ENCODE measurements at regions of chr2 and their contacts with region 1.

Region 1: DNA sequence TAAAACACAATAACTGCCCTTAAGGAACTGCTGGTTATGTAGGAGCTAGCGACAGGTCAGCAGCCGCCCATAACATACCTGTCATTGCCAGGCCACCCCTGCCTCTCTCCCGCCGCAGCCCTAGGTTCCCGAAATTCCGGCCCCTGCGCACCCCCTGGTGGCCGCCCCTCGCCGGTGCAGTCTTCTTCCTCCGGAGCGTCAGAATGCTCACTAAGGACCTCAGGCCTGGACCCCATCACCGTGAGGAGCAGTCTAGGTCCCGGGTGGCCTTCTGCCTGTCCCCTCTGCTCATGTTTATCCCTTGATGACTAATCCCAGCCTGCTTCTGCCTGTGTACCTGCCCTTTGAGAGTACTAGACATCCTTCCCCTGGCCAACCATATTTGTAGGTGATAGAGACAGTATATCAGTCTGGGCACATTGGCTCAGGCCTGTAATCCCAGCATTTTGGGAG is 115.7 kb upstream of the SLC1A4 start:
- DNase-seq: peak in 1 of 2 donors; percentile 68
- ATAC-seq: peak; percentile 83 to 90
- H3K4me3 ChIP-seq: peak overlapping the region; percentile 14 to 50 (median 36)
- H3K27ac ChIP-seq: no peak overlapping the region
- H3K4me1 ChIP-seq: peaks cover 0 to 7% of the 10 kb centered on the region in 2 donors
- H3K27me3 ChIP-seq: no peaks in the 10 kb centered on the region
- CTCF ChIP-seq: peak; percentile 90 to 98 (median 92)
- POLR2A ChIP-seq: no peak

Region 2: GRCh38 chr2:64609227-64609941 is 264.1 kb before region 1 on chr2:
- in situ Hi-C with region 1: loop called in 1 of 4 experiments (anchors 25 kb)
- intact Hi-C with region 1: no loop called
- DNase-seq: peak in 1 of 2 donors; percentile 34
- ATAC-seq: peak; percentile 76 to 79
- H3K4me3 ChIP-seq: peak overlapping the region; percentile 59 to 85 (median 66)
- H3K27ac ChIP-seq: peak overlapping the region; percentile 65 to 83 (median 77)
- H3K4me1 ChIP-seq: peaks cover 8 to 11% of the 10 kb centered on the region in 2 donors
- H3K27me3 ChIP-seq: no peaks in the 10 kb centered on the region
- CTCF ChIP-seq: peak in 4 of 5 experiments; percentile 71 to 76 (median 74)
- POLR2A ChIP-seq: peak in 1 of 2 donors; percentile 24

Region 3: DNA sequence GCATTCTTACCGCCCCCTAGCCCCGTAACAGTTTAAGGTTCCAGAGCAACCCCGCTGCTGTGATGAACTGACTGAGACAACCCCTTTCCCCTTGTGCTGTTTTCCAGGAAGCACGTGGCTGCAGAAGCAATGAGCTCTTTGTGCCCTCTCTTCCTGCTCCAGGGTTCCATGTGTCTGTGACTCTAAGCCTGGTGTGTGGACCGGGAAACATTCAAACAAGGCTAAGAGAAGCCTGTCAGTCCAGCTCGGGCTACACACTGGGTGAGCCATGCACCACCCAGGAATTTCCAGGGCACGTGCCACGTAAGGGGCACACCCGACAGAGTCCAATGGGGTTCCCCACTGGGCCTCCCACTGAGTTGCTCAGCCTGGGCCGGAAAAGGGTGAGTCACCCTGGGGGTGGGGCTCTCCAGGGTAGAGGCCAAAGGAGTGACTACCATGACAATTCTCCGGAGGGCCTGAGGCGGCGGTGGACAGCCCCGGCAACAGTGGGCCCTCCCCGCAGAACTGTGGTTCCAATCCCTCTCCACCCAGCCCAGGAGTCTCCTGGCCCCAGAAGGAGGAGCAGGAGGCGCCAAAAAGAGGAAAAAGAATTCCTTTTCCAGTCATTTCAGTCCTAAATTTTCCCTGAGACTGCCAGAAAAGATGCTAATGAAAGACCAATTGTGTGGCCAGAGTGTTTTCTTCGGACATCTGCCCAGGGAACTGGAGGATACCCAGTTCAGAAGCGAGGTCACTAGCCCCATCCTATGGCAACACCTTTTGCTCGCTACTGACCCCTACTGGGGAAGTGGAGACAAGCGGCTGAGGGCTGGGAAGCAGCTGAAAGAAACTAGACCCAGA is 42.1 kb before region 1 on chr2:
- in situ Hi-C with region 1: no loop called
- intact Hi-C with region 1: no loop called
- DNase-seq: peak; percentile 40 to 80
- ATAC-seq: peak; percentile 81 to 89
- H3K4me3 ChIP-seq: no peak overlapping the region
- H3K27ac ChIP-seq: peak overlapping the region; percentile 42 to 74 (median 62)
- H3K4me1 ChIP-seq: peaks cover 4 to 6% of the 10 kb centered on the region in 2 donors
- H3K27me3 ChIP-seq: no peaks in the 10 kb centered on the region
- CTCF ChIP-seq: peak; percentile 73 to 86 (median 77)
- POLR2A ChIP-seq: no peak

Measured in gastrocnemius medialis (tissue), 4 donors.